Activated T-helper 1 cell treated with anti-CD3 and anti-CD28 coated beads, Interleukin-12 subunit alpha, Interleukin-12 subunit beta, Interleukin-2, Interleukin-4 antibody, amounts not matched to agents 30 ng/mL and 10 ng/mL and 1 ng/mL, durations not matched to agents 14 hours and 24 hours and 36 hours (primary cell): ENCODE measurements at regions of chr21 and their contacts with region 1.

Region 1: DNA sequence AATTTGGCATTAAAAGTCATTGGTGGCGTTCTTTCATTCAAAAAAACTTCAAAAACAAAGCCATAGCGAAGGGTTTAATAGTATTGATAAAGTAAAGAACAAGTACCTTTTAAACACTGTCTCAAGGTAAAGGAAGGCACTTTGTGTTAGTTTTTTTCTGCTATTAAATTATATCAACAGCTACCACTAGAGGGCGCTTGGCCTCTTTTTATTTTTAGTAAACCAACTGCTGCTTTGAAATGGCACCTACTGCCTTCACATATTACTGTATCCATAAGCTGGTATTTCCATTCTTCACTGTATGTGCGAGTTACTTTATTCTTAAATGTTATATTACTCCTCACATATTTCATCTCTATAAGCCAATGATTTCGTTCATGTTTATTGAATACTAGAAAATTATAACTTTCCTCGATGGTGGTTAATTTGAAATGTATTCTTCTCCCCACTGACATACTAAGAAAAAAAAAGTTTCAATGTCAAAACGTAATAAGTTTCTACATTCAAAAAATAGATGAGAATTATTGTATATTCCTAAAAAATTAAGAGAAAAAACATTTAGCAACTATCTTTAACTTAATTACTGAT is 125.7 kb upstream of the CXADR start:
- DNase-seq: peak; percentile 35
- H3K4me3 Mint-ChIP-seq: no peak overlapping the region
- H3K27ac Mint-ChIP-seq: no peak overlapping the region
- H3K4me1 Mint-ChIP-seq: no peaks in the 10 kb centered on the region
- H3K27me3 Mint-ChIP-seq: peaks cover 2% of the 10 kb centered on the region

Region 2: GRCh38 chr21:17585875-17586450 is 198.8 kb after region 1 on chr21:
- intact Hi-C with region 1: loop called (anchors 1 kb)
- DNase-seq: no peak
- H3K4me3 Mint-ChIP-seq: no peak overlapping the region
- H3K27ac Mint-ChIP-seq: no peak overlapping the region
- H3K4me1 Mint-ChIP-seq: no peaks in the 10 kb centered on the region
- H3K27me3 Mint-ChIP-seq: peaks cover 5% of the 10 kb centered on the region

Region 3: DNA sequence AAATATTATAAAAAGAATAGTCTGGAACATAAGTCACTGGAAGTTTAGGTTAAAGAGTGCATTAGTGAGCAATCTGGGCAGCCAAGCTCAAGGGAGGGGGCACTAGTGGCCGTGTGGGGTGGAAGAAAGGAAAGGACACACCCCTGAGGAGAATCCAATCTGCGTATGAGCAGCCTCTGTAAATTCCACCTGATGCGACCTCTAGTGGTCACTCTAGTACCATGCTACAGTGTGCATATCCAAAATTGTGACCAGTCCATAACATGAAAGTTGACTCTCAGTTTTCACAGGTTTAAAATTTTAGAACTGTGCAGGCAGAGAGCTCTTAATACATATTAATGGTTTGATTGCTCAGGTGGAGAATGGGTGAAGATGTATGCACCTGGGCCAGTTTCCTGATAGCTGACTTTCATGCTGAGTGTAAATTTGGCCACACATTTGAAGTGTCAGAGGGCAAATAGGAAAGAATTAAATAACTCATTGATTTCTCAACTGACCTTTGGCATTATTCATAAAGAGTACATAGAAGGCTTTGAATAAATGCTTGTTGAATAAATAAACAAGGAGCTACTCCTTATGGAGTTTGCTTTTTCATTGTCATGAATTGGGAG is 538.0 kb after region 1 on chr21:
- intact Hi-C with region 1: loop called (anchors 10 kb)
- DNase-seq: peak; percentile 14
- H3K4me3 Mint-ChIP-seq: no peak overlapping the region
- H3K27ac Mint-ChIP-seq: no peak overlapping the region
- H3K4me1 Mint-ChIP-seq: no peaks in the 10 kb centered on the region
- H3K27me3 Mint-ChIP-seq: peaks cover 7% of the 10 kb centered on the region